ENCODE measurements at regions of chrX and their contacts with region 1.

Region 1: DNA sequence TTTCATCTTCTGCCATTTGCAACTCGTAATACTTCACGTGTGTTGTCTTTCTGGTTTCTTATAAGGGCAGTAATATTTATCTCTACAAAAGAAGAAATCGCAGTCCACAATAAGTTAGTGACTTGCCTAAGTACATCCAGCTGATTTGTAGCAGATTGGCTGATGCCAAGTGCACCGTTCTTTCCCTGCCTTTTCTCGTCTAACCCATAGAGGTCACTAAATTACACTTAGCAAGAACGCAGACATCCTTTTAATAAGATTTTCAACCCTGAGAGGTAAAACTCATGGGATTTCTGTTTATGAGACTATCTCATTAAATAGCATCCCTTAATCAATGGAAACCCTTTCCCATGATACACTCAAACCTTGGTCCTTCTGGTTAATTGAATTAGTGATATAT is 408.6 kb upstream of the ACTRT1 start:
- DNase-seq: no peak
- H3K4me3 ChIP-seq: no peak overlapping the region
- H3K27ac ChIP-seq: no peak overlapping the region
- H3K4me1 ChIP-seq: no peaks in the 10 kb centered on the region
- H3K27me3 ChIP-seq: no peaks in the 10 kb centered on the region
- CTCF ChIP-seq: no peak
- POLR2A ChIP-seq: no peak

Region 2: DNA sequence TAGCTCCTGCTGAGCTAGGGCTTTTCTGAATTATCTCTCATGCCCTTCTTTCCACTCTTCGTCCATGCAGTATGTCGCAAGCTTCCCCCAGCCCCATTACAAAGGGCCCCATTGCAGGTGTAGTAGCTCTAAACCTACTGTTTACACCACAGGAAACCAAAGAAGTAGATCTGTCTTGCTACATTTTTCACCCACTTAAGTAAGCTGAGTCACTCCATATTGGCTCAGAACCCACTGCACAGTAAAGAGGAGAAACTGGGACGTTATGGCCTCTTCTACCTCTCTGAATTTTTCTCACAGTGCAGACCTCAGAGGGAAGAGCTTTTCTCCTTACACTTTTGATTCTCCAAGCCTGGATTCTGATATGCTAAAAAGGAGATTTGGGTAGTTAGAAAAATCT is 862.3 kb after region 1 on chrX:
- intact Hi-C with region 1: loop called (anchors 5 kb)
- DNase-seq: no peak
- H3K4me3 ChIP-seq: no peak overlapping the region
- H3K27ac ChIP-seq: no peak overlapping the region
- H3K4me1 ChIP-seq: no peaks in the 10 kb centered on the region
- H3K27me3 ChIP-seq: no peaks in the 10 kb centered on the region
- CTCF ChIP-seq: no peak
- POLR2A ChIP-seq: no peak